H1 (cell line): ENCODE measurements at regions of chr10 and their contacts with region 1.

Region 1: DNA sequence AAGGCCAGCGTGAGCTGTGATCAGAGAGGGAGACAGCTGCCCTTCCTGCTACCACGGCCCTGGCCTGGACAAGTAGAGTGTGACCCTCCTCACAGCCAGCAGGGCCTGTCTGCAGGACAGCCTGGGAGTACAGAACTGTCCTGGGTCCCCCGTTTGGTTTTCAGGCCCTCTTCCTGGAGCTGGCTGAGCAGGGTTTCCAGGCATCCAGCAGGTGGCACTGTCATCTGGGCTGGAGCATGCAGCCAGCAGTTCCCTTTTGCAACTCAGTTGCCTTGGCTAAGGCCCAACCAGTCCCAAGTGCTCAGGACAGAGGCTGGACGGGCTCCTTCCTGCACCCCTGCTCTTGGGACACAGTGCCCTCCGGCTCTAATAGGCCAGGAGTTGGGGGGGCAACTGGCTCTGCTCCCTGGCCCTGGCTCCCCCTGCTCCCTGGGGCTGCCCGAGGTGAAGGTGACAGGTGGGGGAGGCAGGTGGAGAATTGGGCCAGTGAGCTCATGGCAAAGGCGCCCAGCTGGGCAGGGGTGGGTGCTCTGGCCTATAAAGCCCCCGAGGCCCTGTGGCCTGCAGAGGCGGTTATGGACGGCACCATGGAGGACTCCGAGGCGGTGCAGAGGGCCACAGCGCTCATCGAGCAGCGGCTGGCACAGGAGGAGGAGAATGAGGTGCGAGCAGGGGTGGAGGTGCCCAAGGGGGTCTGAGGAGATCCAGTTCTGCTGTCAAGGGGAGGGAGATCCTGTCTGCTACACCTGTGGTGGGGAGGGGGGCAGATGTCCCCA is at the start of gene ANKRD2:
- DNase-seq: peak; percentile 59 to 85
- H3K4me3 ChIP-seq: no peak within 1 kb of the TSS
- H3K27ac ChIP-seq: no peak within 1 kb of the TSS
- H3K4me1 ChIP-seq: peaks cover 2 to 6% (median 4%) of the 10 kb centered on the region in 4 experiments; a peak in 3 of 7 replicates
- H3K27me3 ChIP-seq: no peaks in the 10 kb centered on the region
- CTCF ChIP-seq: peak; percentile 96 to 99 (median 98)
- EP300 ChIP-seq: no peak
- POLR2A ChIP-seq: no peak
- RAD21 ChIP-seq: peak; percentile 82 to 89
- total RNA-seq, gene ANKRD2: not detected in 2 replicates

Region 2: GRCh38 chr10:97243836-97244235 is 328.6 kb before region 1 on chr10:
- CTCF ChIA-PET with region 1: no interaction called
- POLR2A ChIA-PET with region 1: no interaction called
- DNase-seq: no peak
- H3K4me3 ChIP-seq: no peak overlapping the region
- H3K27ac ChIP-seq: no peak overlapping the region
- H3K4me1 ChIP-seq: no peaks in the 10 kb centered on the region
- H3K27me3 ChIP-seq: no peaks in the 10 kb centered on the region
- CTCF ChIP-seq: no peak
- EP300 ChIP-seq: no peak
- POLR2A ChIP-seq: no peak
- RAD21 ChIP-seq: no peak

Region 3: GRCh38 chr10:97534746-97535367 is 37.5 kb before region 1 on chr10:
- CTCF ChIA-PET with region 1: interaction called, 33 read pairs
- POLR2A ChIA-PET with region 1: interaction called, 3 read pairs
- DNase-seq: peak in 1 of 2 experiments; percentile 79
- H3K4me3 ChIP-seq: no peak overlapping the region
- H3K27ac ChIP-seq: no peak overlapping the region
- H3K4me1 ChIP-seq: peaks cover 0 to 15% (median 8%) of the 10 kb centered on the region in 4 experiments; a peak in 6 of 7 replicates
- H3K27me3 ChIP-seq: no peaks in the 10 kb centered on the region
- CTCF ChIP-seq: peak; percentile 78 to 85 (median 84)
- EP300 ChIP-seq: no peak
- POLR2A ChIP-seq: no peak
- RAD21 ChIP-seq: peak; percentile 67 to 76

Region 4: DNA sequence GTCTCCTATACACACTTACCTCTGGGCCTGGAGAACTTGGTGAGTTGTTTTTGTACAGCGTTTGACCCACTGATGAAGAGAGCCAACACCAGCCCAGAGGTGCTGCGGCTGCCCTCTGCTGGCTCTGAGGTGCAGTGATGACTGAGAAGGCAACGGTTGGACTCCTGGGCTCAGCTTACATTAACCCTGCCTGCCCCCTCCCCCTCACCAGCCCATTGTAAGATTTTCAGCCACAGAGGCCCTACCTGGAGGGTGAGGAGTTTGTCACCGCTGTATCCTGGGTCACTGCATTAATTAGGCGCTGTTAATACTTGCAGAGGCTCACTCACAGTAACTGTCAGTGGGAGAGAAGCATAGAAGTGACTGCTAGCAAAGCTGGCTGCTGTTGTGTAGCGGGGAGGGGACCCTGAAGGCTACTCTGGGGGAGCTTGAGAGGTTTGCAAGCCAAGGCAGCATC is 18.8 kb before region 1 on chr10:
- CTCF ChIA-PET with region 1: interaction called, 169 read pairs
- POLR2A ChIA-PET with region 1: interaction called, 3 read pairs
- DNase-seq: peak in 1 of 2 experiments; percentile 81
- H3K4me3 ChIP-seq: peak overlapping the region in 3 of 4 experiments; percentile 30 to 32 (median 31); a peak in 6 of 8 replicates
- H3K27ac ChIP-seq: no peak overlapping the region; the same call in 1 of the 2 replicates
- H3K4me1 ChIP-seq: peaks cover 15 to 29% (median 22%) of the 10 kb centered on the region in 4 experiments
- H3K27me3 ChIP-seq: no peaks in the 10 kb centered on the region
- CTCF ChIP-seq: peak; percentile 89 to 95 (median 95)
- EP300 ChIP-seq: no peak
- POLR2A ChIP-seq: no peak
- RAD21 ChIP-seq: peak; percentile 84 to 88

Region 5: GRCh38 chr10:97590082-97590747 is 17.8 kb after region 1 on chr10:
- CTCF ChIA-PET with region 1: interaction called, 108 read pairs
- POLR2A ChIA-PET with region 1: interaction called, 7 read pairs
- DNase-seq: no peak
- H3K4me3 ChIP-seq: no peak overlapping the region
- H3K27ac ChIP-seq: no peak overlapping the region
- H3K4me1 ChIP-seq: no peaks in the 10 kb centered on the region
- H3K27me3 ChIP-seq: no peaks in the 10 kb centered on the region
- CTCF ChIP-seq: no peak
- EP300 ChIP-seq: no peak
- POLR2A ChIP-seq: no peak
- RAD21 ChIP-seq: no peak

Region 6: GRCh38 chr10:97601268-97602215 is 29.1 kb after region 1 on chr10:
- CTCF ChIA-PET with region 1: interaction called, 16 read pairs
- POLR2A ChIA-PET with region 1: no interaction called
- DNase-seq: no peak
- H3K4me3 ChIP-seq: no peak overlapping the region
- H3K27ac ChIP-seq: no peak overlapping the region
- H3K4me1 ChIP-seq: peaks cover 0 to 2% (median under 1%) of the 10 kb centered on the region in 4 experiments; a peak in 1 of 7 replicates
- H3K27me3 ChIP-seq: no peaks in the 10 kb centered on the region
- CTCF ChIP-seq: no peak
- EP300 ChIP-seq: no peak
- POLR2A ChIP-seq: no peak
- RAD21 ChIP-seq: no peak